Gastrocnemius medialis (tissue), 4 donors: ENCODE measurements at regions of chr3 and their contacts with region 1.

Region 1: GRCh38 chr3:134350861-134351333 is 23.4 kb downstream of the AMOTL2 start:
- DNase-seq: peak; percentile 79 to 83
- ATAC-seq: peak; percentile 61 to 63
- H3K4me3 ChIP-seq: no peak overlapping the region
- H3K27ac ChIP-seq: peak overlapping the region; percentile 24 to 76 (median 68)
- H3K4me1 ChIP-seq: peaks cover 61 to 78% of the 10 kb centered on the region in 2 donors
- H3K27me3 ChIP-seq: no peaks in the 10 kb centered on the region
- CTCF ChIP-seq: no peak
- POLR2A ChIP-seq: no peak

Region 2: DNA sequence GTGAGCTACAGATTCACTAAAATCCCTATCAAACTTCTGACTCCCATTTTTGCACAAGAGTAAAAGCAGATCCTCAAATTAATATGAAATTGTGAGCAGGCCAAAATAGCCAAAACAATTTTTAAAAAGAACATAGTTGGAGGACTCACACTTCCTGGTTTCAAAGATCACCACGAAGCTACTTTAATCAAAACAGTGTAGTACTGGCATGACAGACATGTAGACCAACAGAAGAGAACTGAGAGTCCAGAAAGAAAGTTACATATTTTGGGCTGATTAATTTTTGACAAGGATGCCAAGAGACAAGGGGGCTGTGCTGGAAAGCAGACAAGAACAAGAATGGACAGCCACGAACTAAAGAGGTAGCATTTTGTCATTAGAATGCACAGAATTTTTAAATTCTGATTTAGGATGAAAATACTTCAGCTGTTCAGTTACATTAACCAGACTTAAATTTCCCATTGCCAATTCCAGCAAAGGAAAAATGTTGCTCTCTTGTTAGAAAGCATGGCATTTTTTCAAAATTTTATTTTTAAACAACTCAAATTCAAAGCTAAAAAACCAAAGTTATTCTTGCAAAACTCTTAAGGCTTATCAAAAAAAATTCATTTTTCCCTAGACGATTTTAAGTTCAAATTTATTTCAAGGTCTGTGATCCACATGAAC is 114.3 kb before region 1 on chr3:
- in situ Hi-C with region 1: no loop called
- intact Hi-C with region 1: no loop called
- DNase-seq: no peak
- ATAC-seq: no peak
- H3K4me3 ChIP-seq: no peak overlapping the region
- H3K27ac ChIP-seq: peak overlapping the region; percentile 13 to 53 (median 30)
- H3K4me1 ChIP-seq: peaks cover 68 to 70% of the 10 kb centered on the region in 2 donors
- H3K27me3 ChIP-seq: no peaks in the 10 kb centered on the region
- CTCF ChIP-seq: no peak
- POLR2A ChIP-seq: no peak

Region 3: DNA sequence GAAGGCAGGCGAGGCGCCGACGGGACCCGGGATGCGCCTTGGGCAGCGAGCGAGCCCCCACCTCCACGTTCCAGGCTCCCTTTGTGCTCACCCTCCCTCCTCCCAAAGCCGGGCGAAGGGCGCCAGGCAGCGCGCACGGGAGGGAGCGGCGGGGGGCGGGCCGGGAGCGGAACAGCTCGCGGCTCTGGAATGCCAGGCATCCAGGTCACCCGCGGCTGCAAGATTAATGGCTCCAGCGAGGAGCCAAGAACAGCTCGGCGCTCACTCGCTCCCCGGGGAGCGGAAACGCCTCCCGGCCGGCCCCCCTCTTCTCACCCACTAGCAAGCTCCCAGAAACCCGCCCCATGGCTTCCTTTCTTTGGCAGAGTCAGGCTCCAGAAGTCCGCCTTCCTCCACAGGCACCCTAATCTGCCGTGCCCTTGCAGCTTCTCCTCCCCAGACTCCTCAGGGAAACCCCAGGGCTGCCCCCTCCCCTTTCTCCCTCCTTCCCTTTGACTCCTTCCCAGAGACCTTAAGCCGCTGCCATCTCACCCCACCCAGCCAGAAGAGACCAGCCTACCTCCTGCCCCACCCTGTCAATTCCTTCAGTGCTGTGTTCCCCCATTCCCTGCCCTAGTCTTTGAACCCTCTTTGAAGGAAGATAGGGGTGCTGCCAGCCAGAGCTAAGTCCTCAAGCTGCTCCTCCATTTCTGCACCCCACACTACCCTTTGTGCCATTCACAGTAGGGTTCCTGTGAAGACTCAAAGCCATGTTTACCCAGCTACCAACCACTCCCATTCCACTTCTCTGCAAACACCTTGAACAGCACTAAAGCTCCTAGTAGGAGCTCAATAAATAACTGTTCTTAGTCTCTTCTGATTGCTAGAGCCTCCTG is 13.4 kb after region 1 on chr3:
- in situ Hi-C with region 1: no loop called
- intact Hi-C with region 1: loop called (anchors 1 kb)
- DNase-seq: peak; percentile 88 to 95
- ATAC-seq: peak; percentile 82 to 87
- H3K4me3 ChIP-seq: peak overlapping the region; percentile 39 to 49 (median 44)
- H3K27ac ChIP-seq: peak overlapping the region; percentile 72 to 99 (median 97)
- H3K4me1 ChIP-seq: peaks cover 81 to 98% of the 10 kb centered on the region in 2 donors
- H3K27me3 ChIP-seq: no peaks in the 10 kb centered on the region
- CTCF ChIP-seq: no peak
- POLR2A ChIP-seq: no peak